ENCODE measurements at regions of chr4 and their contacts with region 1.

Region 1: DNA sequence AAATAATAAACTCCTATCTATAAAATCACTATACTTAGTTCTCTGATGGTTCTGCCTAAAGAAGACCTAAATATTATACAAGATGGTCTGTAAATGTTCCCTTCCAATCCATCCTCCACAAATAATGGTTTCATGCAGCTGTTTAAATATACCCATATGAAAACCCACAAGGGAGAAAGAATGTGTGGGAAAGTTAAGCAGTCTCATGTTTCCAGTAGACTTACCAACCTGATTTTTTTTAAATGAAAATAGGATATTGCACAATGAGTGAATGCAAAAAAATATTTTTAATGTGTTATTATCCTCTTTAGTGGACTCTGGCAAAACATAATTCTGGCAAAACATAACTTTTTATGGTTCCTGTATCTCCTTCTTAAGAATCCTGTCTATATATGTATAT is 23.3 kb downstream of the CAMK2D start:
- DNase-seq: no peak
- ATAC-seq: peak in 3 of 8 donors; percentile 13 to 45 (median 30)
- H3K4me3 ChIP-seq: no peak overlapping the region
- H3K27ac ChIP-seq: peak overlapping the region in 6 of 10 donors; percentile 1 to 48 (median 20)
- H3K4me1 ChIP-seq: peaks cover 0 to 76% (median 48%) of the 10 kb centered on the region in 9 donors
- H3K27me3 ChIP-seq: no peaks in the 10 kb centered on the region
- CTCF ChIP-seq: no peak

Region 2: DNA sequence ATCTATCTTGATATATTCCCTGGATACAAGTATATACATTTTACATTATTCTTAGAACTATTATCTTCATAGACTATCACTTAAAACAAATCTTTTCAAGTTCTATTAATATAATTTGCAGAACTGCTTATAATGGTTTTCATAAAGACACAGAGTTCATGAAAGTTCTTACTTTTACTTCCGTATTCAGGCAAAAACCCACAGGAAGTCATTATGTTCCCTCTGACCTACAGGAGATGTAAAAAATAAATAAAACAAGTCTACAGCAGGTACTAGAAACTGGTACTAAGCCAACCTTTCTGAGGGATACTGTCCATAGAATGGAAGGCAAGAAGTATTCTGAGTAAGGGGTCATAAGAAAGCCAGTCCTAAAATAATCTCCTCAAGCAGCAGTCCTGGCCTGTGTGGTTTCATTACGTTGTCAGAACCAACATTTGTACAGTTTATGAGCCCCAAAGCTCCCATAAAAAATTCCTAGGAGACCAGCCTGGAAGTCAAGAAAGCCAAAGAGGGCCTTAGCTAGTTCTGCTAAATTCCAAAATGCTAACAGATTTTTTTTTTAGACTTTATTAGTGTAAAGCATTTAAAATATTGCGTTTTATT is 45.3 kb before region 1 on chr4:
- intact Hi-C with region 1: loop called in 3 of 10 experiments (anchors 5 to 10 kb)
- DNase-seq: no peak
- ATAC-seq: peak in 1 of 8 donors; percentile 35
- H3K4me3 ChIP-seq: no peak overlapping the region
- H3K27ac ChIP-seq: peak overlapping the region in 3 of 10 donors; percentile 0 to 56 (median 46)
- H3K4me1 ChIP-seq: peaks cover 2 to 85% (median 44%) of the 10 kb centered on the region in 9 donors
- H3K27me3 ChIP-seq: no peaks in the 10 kb centered on the region
- CTCF ChIP-seq: no peak

Region 3: GRCh38 chr4:114302472-114302871 is 564.2 kb after region 1 on chr4:
- intact Hi-C with region 1: no loop called
- DNase-seq: no peak
- ATAC-seq: no peak
- H3K4me3 ChIP-seq: no peak overlapping the region
- H3K27ac ChIP-seq: no peak overlapping the region
- H3K4me1 ChIP-seq: no peaks in the 10 kb centered on the region
- H3K27me3 ChIP-seq: no peaks in the 10 kb centered on the region
- CTCF ChIP-seq: no peak